Sigmoid colon (tissue), 7 donors: ENCODE measurements at regions of chr16 and their contacts with region 1.

Region 1: GRCh38 chr16:3282730-3283524 is at the start of gene ZNF263:
- DNase-seq: peak; percentile 98
- H3K4me3 ChIP-seq: peak within 1 kb of the TSS; percentile 68 to 99 (median 96)
- H3K27ac ChIP-seq: peak within 1 kb of the TSS; percentile 94 to 100 (median 99)
- H3K4me1 ChIP-seq: peaks cover 0 to 37% (median 29%) of the 10 kb centered on the region in 4 donors
- H3K27me3 ChIP-seq: no peaks in the 10 kb centered on the region
- CTCF ChIP-seq: no peak
- EP300 ChIP-seq: peak in 1 of 4 donors; percentile 28
- POLR2A ChIP-seq: peak; percentile 23 to 68
- total RNA-seq, gene ZNF263: 27.5 to 51.3 (median 33.4) TPM

Region 2: GRCh38 chr16:3021449-3022207 is 261.3 kb before region 1 on chr16:
- intact Hi-C with region 1: loop called (anchors 2 kb)
- DNase-seq: peak; percentile 90
- H3K4me3 ChIP-seq: peak overlapping the region; percentile 46 to 74 (median 61)
- H3K27ac ChIP-seq: peak overlapping the region; percentile 98 to 99 (median 98)
- H3K4me1 ChIP-seq: peaks cover 0 to 62% (median 54%) of the 10 kb centered on the region in 4 donors
- H3K27me3 ChIP-seq: peaks cover 17 to 28% (median 24%) of the 10 kb centered on the region in 3 donors
- CTCF ChIP-seq: peak in 1 of 4 experiments; percentile 27
- EP300 ChIP-seq: no peak
- POLR2A ChIP-seq: no peak

Region 3: DNA sequence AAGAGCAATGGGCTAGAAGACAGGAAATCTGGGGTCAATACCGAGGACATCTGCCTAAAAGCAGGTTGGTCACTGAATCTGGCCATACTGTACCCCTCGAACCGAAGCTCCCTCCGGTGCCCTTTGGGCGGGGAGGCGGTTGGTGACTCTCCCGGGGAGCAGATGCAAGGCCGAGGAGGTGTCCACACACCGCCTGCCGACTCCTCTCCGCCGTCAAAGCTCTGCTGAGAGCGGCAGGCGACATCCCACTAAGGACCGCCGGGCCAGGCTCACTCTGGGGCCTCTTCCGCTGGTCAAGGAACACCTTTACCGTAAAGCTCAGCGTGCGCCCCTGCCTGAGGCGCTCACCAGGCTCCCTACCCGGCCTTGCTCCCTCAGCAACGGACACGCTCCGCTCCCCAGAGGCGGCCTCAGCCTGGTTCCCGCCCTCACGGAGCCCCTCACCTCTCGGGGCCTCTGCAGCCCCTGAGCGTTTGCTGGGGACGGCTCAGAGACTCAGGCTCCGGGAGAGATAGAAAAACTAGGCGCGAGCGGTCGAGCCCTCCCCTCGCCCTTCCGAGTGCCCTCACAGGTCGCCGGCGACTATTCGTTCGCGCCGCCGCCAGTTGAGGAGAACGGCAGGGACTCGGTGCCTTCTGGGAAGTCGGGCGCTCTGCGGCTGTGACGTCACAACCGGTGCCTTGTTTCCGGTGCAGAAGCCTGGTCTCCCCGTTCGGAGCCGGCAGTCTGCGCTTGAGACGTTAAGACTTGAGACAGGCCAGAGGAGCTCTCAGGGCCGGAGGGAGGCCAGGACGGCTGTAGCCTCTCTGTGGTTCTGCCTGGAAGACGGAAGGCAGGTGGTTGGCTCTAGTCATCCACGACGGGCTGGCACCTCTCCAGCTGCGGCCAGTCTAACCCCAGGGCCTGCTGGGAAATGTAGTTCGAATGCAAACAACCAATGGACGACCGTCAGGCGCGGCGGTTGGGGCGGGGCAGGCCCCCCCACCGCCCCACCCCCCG is 48.1 kb before region 1 on chr16 and contains the start of gene ZNF200:
- intact Hi-C with region 1: loop called (anchors 1 kb)
- DNase-seq: peak; percentile 99
- H3K4me3 ChIP-seq: peak within 1 kb of the TSS; percentile 76 to 90 (median 86)
- H3K27ac ChIP-seq: peak within 1 kb of the TSS; percentile 94 to 98 (median 96)
- H3K4me1 ChIP-seq: peaks cover 0 to 15% (median 13%) of the 10 kb centered on the region in 4 donors
- H3K27me3 ChIP-seq: no peaks in the 10 kb centered on the region
- CTCF ChIP-seq: no peak
- EP300 ChIP-seq: peak in 1 of 4 donors; percentile 4
- POLR2A ChIP-seq: peak; percentile 10 to 36
- total RNA-seq, gene ZNF200: 5.5 to 6.8 (median 6.2) TPM

Region 4: GRCh38 chr16:3305109-3306068 is 22.5 kb after region 1 on chr16 and contains the starts of genes TIGD7 and ZNF75A:
- intact Hi-C with region 1: loop called (anchors 1 kb)
- DNase-seq: peak; percentile 93
- H3K4me3 ChIP-seq: peak within 1 kb of the TSS; percentile 61 to 84 (median 67)
- H3K27ac ChIP-seq: peak within 1 kb of the TSS; percentile 89 to 94 (median 92)
- H3K4me1 ChIP-seq: peaks cover 0 to 35% (median 14%) of the 10 kb centered on the region in 4 donors
- H3K27me3 ChIP-seq: no peaks in the 10 kb centered on the region
- CTCF ChIP-seq: peak in 1 of 4 experiments; percentile 10
- EP300 ChIP-seq: no peak
- POLR2A ChIP-seq: peak; percentile 80 to 85
- total RNA-seq, gene TIGD7: 3.5 to 12.8 (median 6.3) TPM
- total RNA-seq, gene ZNF75A: 26.6 to 32.8 (median 27.7) TPM

Region 5: GRCh38 chr16:3328643-3329042 is 45.7 kb after region 1 on chr16:
- intact Hi-C with region 1: no loop called
- DNase-seq: no peak
- H3K4me3 ChIP-seq: no peak overlapping the region
- H3K27ac ChIP-seq: no peak overlapping the region
- H3K4me1 ChIP-seq: no peaks in the 10 kb centered on the region
- H3K27me3 ChIP-seq: no peaks in the 10 kb centered on the region
- CTCF ChIP-seq: no peak
- EP300 ChIP-seq: no peak
- POLR2A ChIP-seq: no peak

Region 6: DNA sequence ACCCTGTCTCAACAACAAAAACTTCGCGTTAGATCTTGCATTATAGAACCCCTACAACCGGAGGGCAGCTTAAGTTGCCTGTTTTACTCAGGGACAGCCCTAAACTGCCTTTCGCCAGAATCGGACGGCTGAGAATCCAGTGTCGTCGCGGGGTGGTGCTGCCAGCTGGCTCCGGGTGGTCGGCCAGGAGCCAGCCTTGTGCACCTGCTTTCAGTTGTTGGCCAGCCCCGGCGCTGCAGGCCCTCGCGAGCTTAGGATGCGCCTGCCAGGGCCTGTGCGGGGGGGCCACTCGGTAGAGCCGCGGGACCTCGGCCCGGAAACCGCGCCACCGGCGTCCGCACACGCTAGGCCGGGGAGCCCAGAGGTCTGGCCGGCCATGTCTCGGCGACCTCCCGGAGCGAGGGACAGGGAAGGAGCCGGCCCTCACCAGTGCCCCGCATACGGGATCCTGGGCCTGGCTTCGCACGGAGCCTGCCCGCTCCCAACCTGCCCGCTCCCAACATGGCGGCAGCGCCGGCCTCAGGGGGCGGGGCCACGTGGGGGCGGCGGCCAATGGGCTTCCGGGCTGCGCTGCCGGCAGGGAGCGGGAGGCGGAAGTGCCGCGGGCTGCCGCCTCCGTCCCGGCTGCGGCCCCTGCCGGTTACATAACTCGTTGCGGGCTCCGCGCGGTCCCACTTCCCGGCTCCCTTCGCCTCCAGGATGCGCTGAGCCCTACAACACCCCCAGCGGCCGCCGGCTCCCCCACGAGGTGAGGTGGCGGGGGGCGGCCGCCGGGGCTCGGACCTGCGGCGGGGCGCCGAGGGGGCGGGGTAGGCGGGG is 174.7 kb after region 1 on chr16:
- intact Hi-C with region 1: loop called (anchors 1 kb)
- DNase-seq: peak; percentile 96
- H3K4me3 ChIP-seq: peak overlapping the region; percentile 82 to 93 (median 84)
- H3K27ac ChIP-seq: peak overlapping the region; percentile 89 to 97 (median 94)
- H3K4me1 ChIP-seq: peaks cover 0 to 50% (median 42%) of the 10 kb centered on the region in 4 donors
- H3K27me3 ChIP-seq: no peaks in the 10 kb centered on the region
- CTCF ChIP-seq: peak in 2 of 4 experiments; percentile 19 to 46
- EP300 ChIP-seq: no peak
- POLR2A ChIP-seq: peak in 1 of 2 donors; percentile 37